ENCODE measurements at regions of chr6 and their contacts with region 1.

Region 1: DNA sequence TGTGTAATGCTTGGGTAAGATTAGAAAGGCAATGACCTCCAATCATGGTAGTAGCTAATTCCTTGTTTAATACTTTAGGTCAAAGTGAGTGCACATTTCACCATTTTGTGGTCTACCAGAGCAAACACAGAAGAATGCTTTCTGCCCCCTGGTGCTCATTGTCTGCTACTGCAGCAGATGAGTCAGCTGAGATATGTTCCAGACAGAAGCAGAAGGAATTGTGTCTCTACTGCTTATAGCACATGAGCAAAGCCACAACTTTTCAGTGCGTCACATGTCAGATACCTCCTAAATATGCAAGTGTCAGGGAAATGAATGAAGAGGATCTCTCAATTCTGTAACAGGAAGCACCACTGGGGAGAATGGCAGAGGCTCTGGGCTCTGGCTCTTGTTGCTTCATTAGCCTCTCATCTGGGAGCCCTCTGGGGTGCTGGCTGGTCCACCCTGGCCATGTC is 308.9 kb downstream of the ALDH8A1 start:
- DNase-seq: peak; percentile 95
- H3K4me3 Mint-ChIP-seq: no peak overlapping the region
- H3K27ac Mint-ChIP-seq: peak overlapping the region; percentile 81
- H3K4me1 Mint-ChIP-seq: peaks cover 25% of the 10 kb centered on the region
- H3K27me3 Mint-ChIP-seq: no peaks in the 10 kb centered on the region
- CTCF ChIP-seq: peak; percentile 79

Region 2: GRCh38 chr6:134347916-134348805 is 292.8 kb before region 1 on chr6:
- CTCF ChIA-PET with region 1: no interaction called
- POLR2A ChIA-PET with region 1: interaction called, 3 read pairs
- intact Hi-C with region 1: loop called (anchors 1 kb)
- DNase-seq: peak; percentile 89
- H3K4me3 Mint-ChIP-seq: peak overlapping the region; percentile 60
- H3K27ac Mint-ChIP-seq: peak overlapping the region; percentile 71
- H3K4me1 Mint-ChIP-seq: peaks cover 13% of the 10 kb centered on the region
- H3K27me3 Mint-ChIP-seq: no peaks in the 10 kb centered on the region
- CTCF ChIP-seq: no peak

Region 3: GRCh38 chr6:134413241-134413643 is 227.8 kb before region 1 on chr6:
- CTCF ChIA-PET with region 1: no interaction called
- POLR2A ChIA-PET with region 1: no interaction called
- intact Hi-C with region 1: no loop called
- DNase-seq: no peak
- H3K4me3 Mint-ChIP-seq: no peak overlapping the region
- H3K27ac Mint-ChIP-seq: no peak overlapping the region
- H3K4me1 Mint-ChIP-seq: no peaks in the 10 kb centered on the region
- H3K27me3 Mint-ChIP-seq: no peaks in the 10 kb centered on the region
- CTCF ChIP-seq: no peak

Region 4: GRCh38 chr6:134464690-134465411 is 176.2 kb before region 1 on chr6:
- CTCF ChIA-PET with region 1: interaction called, 5 read pairs
- POLR2A ChIA-PET with region 1: interaction called, 13 read pairs
- intact Hi-C with region 1: no loop called
- DNase-seq: peak; percentile 76
- H3K4me3 Mint-ChIP-seq: no peak overlapping the region
- H3K27ac Mint-ChIP-seq: peak overlapping the region; percentile 55
- H3K4me1 Mint-ChIP-seq: peaks cover 36% of the 10 kb centered on the region
- H3K27me3 Mint-ChIP-seq: no peaks in the 10 kb centered on the region
- CTCF ChIP-seq: no peak

Region 5: GRCh38 chr6:134537146-134537555 is 103.9 kb before region 1 on chr6:
- CTCF ChIA-PET with region 1: interaction called, 7 read pairs
- POLR2A ChIA-PET with region 1: interaction called, 10 read pairs
- intact Hi-C with region 1: loop called (anchors 1 kb)
- DNase-seq: peak; percentile 98
- H3K4me3 Mint-ChIP-seq: no peak overlapping the region
- H3K27ac Mint-ChIP-seq: peak overlapping the region; percentile 65
- H3K4me1 Mint-ChIP-seq: peaks cover 32% of the 10 kb centered on the region
- H3K27me3 Mint-ChIP-seq: no peaks in the 10 kb centered on the region
- CTCF ChIP-seq: no peak

Region 6: GRCh38 chr6:134882426-134883038 is 241.5 kb after region 1 on chr6:
- CTCF ChIA-PET with region 1: interaction called, 7 read pairs
- POLR2A ChIA-PET with region 1: interaction called, 3 read pairs
- intact Hi-C with region 1: loop called (anchors 5 kb)
- DNase-seq: peak; percentile 82
- H3K4me3 Mint-ChIP-seq: no peak overlapping the region
- H3K27ac Mint-ChIP-seq: no peak overlapping the region
- H3K4me1 Mint-ChIP-seq: peaks cover 16% of the 10 kb centered on the region
- H3K27me3 Mint-ChIP-seq: no peaks in the 10 kb centered on the region
- CTCF ChIP-seq: peak; percentile 94

Measured in MCF 10A (cell line).